Sigmoid colon (tissue), 7 donors: ENCODE measurements at regions of chr22 and their contacts with region 1.

Region 1: DNA sequence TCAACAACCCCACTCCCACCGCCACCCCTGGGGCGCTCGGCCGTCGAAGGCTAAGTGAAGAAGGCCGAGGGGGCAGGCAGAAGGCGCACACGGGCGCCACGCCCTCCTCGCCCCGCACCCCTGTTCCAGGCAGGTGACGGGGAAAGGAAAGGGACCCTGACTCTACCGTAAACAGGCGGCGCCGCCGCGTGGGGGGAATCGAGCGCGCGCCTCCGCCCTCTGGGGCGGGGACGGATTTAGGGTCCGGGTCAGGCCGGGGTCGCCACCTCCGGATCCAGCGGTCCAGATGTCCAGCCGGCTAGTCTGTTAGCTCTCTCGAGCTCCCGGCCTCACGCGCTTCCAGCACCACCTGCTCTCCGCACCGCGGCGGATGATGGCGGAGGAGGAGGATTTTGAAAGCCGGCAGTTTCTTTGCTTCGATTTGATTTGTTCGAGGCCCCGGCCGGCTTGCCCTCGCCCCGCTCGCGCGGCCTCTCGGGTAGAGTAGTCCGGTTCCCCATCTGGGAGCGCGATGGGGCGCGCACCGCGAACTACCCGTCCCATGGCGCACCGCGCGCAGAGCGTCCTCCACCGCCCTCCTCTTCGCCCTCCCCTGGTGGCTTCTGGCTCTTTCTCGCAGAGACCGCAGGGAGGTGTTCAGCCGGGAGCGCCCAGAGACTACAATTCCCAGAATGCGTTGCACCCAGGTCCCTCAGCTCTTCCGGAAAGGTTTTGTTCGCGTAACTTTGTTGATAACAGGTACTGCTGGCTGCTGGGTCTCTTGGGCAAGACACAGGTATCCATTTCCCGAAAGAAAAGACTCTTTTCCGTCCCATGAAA is at the start of gene RANGAP1:
- DNase-seq: peak; percentile 98
- H3K4me3 ChIP-seq: peak within 1 kb of the TSS; percentile 57 to 98 (median 80)
- H3K27ac ChIP-seq: peak within 1 kb of the TSS; percentile 76 to 93 (median 86)
- H3K4me1 ChIP-seq: peaks cover 0 to 26% (median 13%) of the 10 kb centered on the region in 4 donors
- H3K27me3 ChIP-seq: no peaks in the 10 kb centered on the region
- CTCF ChIP-seq: no peak
- EP300 ChIP-seq: peak in 1 of 4 donors; percentile 23
- POLR2A ChIP-seq: peak; percentile 50 to 68
- total RNA-seq, gene RANGAP1: 24.5 to 41.3 (median 33.2) TPM

Region 2: DNA sequence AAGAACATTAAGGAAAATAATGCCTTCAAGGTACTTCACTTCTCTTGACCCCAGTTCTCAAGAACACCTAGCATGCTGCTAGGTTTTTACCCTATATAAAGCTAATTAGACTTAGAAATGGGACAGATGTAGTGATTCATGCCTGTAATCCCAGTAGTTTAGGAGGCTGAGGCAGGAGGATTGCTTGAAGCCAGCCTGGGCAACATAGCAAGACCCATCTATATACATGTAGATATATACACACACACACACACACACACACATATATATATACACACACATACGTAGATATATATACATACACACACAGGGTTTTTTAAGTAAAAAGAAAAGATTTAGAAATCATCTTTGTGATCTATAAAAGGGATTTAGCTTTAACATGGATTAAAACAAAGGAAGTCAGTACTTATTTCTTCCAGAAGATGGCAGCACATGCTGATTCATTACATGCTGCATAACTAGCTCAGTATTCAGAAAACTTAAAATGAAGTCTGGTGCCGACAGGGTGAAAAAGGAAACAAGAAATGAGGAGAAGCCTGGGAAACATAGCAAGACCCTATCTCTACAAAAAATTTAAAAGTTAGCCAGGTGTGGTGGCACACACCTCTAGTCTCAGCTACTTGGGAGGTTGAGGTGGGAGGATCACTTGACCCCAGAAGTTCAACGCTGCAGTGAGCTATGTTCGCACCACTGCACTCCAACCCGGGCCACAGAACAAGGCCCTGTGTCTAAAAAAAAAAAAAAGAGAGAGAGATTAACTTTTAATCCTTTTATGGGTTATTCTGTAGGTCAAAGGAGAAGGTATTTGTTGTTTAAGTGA is 363.3 kb before region 1 on chr22:
- intact Hi-C with region 1: loop called (anchors 5 kb)
- DNase-seq: no peak
- H3K4me3 ChIP-seq: no peak overlapping the region
- H3K27ac ChIP-seq: no peak overlapping the region
- H3K4me1 ChIP-seq: peaks cover 0 to 4% (median 1%) of the 10 kb centered on the region in 4 donors
- H3K27me3 ChIP-seq: no peaks in the 10 kb centered on the region
- CTCF ChIP-seq: peak; percentile 33 to 75 (median 60)
- EP300 ChIP-seq: no peak
- POLR2A ChIP-seq: no peak

Region 3: GRCh38 chr22:41367039-41367679 is 81.1 kb after region 1 on chr22:
- intact Hi-C with region 1: loop called (anchors 5 kb)
- DNase-seq: peak; percentile 99
- H3K4me3 ChIP-seq: peak overlapping the region; percentile 41 to 57 (median 56)
- H3K27ac ChIP-seq: peak overlapping the region; percentile 83 to 85 (median 83)
- H3K4me1 ChIP-seq: peaks cover 0 to 51% (median 34%) of the 10 kb centered on the region in 4 donors
- H3K27me3 ChIP-seq: no peaks in the 10 kb centered on the region
- CTCF ChIP-seq: peak in 3 of 4 experiments; percentile 22 to 27 (median 27)
- EP300 ChIP-seq: peak in 2 of 4 donors; percentile 22 to 69
- POLR2A ChIP-seq: peak; percentile 46 to 69

Region 4: GRCh38 chr22:41381329-41382097 is 95.5 kb after region 1 on chr22 and contains the start of gene TEF:
- intact Hi-C with region 1: loop called (anchors 1 kb)
- DNase-seq: peak; percentile 100
- H3K4me3 ChIP-seq: peak within 1 kb of the TSS; percentile 62 to 90 (median 85)
- H3K27ac ChIP-seq: peak within 1 kb of the TSS; percentile 90 to 99 (median 99)
- H3K4me1 ChIP-seq: peaks cover 0 to 36% (median 28%) of the 10 kb centered on the region in 4 donors
- H3K27me3 ChIP-seq: no peaks in the 10 kb centered on the region
- CTCF ChIP-seq: no peak
- EP300 ChIP-seq: peak in 2 of 4 donors; percentile 32 to 44
- POLR2A ChIP-seq: peak; percentile 16 to 57
- total RNA-seq, gene TEF: 21.3 to 30.3 (median 24.8) TPM

Region 5: DNA sequence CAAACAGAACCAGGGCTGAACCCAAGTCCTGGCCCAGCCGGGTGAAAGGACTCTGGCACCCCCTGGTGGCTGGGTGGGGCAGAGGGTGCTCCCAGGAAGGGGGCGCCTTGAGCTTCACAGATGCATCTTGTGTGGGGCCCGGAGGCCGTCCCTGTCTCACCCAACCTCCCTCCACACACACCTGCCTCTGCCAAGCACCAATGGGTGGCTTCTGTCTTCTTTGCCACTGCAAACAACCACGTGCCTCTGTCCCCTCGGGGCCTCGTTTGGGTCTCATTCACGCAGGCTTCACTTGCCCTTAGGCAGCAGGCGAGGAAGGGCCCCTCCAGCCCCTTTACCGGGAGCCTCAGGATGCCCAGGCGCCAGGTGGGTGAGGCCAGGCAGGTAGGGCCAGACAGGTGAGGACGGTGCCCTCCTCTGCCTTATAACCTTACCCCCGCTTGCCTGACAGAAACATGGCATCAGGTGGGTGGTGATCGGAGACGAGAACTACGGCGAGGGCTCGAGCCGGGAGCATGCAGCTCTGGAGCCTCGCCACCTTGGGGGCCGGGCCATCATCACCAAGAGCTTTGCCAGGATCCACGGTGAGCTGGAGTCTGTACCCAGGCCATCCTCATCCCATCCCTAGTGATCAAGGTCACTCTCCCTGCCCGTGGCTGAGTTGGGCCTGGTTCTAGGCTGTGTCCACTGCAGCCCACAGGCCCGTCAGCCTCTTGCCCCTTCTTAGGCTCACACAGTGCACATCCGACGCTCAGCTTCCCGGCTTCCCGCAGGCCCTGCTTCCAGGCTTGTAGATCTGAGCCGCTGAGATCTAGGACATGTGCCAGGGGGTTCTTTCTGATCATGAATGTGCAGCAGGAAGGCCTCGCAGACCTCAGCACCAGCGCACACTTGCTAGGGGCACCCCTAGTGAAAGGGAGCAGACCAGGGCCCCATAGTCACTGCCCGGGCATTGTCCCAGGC is 241.1 kb after region 1 on chr22:
- intact Hi-C with region 1: loop called (anchors 10 kb)
- DNase-seq: peak; percentile 84
- H3K4me3 ChIP-seq: no peak overlapping the region
- H3K27ac ChIP-seq: peak overlapping the region; percentile 82 to 91 (median 88)
- H3K4me1 ChIP-seq: peaks cover 0 to 45% (median 40%) of the 10 kb centered on the region in 4 donors
- H3K27me3 ChIP-seq: no peaks in the 10 kb centered on the region
- CTCF ChIP-seq: peak; percentile 47 to 88 (median 78)
- EP300 ChIP-seq: no peak
- POLR2A ChIP-seq: no peak